HEK293 (cell line): ENCODE measurements at regions of chr7 and their contacts with region 1.

Region 1: DNA sequence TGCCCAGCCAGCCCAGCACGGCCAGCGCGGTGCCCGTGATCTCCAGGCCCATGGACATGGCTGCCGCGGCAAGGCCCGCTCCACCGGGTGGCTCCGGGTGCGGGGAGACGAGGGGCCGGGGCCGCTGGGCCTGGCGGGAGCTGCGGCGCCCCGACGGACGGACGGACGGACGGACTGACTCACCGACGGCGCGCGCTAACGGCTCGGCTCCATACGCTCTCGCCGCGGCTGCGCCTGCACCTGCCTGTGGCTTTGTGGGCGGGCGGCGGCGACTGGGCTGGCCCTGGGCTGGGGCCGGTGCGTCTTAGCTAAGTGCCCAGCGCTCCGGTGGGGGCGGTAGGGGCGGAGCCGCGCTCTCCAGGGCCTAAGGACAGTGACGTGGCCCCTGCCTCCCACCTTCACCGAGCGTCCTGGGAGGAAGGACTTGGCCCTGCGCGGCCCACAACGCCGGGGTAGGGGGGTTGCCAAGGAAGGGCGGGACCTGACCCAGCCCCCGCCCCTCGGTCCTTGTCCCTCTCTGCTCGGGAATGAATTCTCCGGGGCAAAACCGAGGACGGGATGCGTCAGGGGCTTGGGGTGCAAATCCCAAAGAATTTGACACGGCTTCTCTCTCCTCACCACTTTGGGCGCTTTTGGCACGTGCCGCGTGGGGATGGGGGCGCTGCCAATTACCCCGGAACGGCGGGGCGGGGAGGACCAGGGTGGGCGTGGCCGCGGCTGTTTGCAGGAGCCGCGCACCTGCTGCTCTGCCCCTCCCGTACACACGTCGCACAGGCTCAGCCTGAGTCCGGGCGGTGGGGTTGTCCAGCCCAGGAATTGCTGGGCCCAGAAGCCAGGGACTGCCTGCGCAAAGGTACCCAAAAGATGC is at the start of gene CLDN3:
- H3K4me3 ChIP-seq: peak within 1 kb of the TSS; percentile 50
- H3K27ac ChIP-seq: no peak within 1 kb of the TSS; the same call in 1 of the 2 replicates
- H3K4me1 ChIP-seq: no peaks in the 10 kb centered on the region
- CTCF ChIP-seq: no peak

Region 2: GRCh38 chr7:73749931-73750776 is 20.1 kb before region 1 on chr7:
- CTCF ChIA-PET with region 1: no interaction called
- POLR2A ChIA-PET with region 1: interaction called, 10 read pairs
- H3K4me3 ChIP-seq: no peak overlapping the region
- H3K27ac ChIP-seq: no peak overlapping the region
- H3K4me1 ChIP-seq: no peaks in the 10 kb centered on the region
- CTCF ChIP-seq: no peak

Region 3: GRCh38 chr7:74604326-74605020 is 834.2 kb after region 1 on chr7:
- CTCF ChIA-PET with region 1: no interaction called
- POLR2A ChIA-PET with region 1: interaction called, 12 read pairs
- H3K4me3 ChIP-seq: no peak overlapping the region
- H3K27ac ChIP-seq: no peak overlapping the region
- H3K4me1 ChIP-seq: no peaks in the 10 kb centered on the region
- CTCF ChIP-seq: no peak